Ascending aorta (tissue), 2 donors: ENCODE measurements at regions of chr17 and their contacts with region 1.

Region 1: GRCh38 chr17:40443583-40444327 is 505 bp downstream of the IGFBP4 start:
- DNase-seq: peak in 1 of 2 donors; percentile 88
- H3K4me3 ChIP-seq: peak overlapping the region; percentile 64 to 90
- H3K27ac ChIP-seq: peak overlapping the region; percentile 89 to 92
- H3K4me1 ChIP-seq: peaks cover 14 to 44% of the 10 kb centered on the region in 2 donors
- H3K27me3 ChIP-seq: no peaks in the 10 kb centered on the region
- CTCF ChIP-seq: peak in 2 of 3 experiments; percentile 25 to 43

Region 2: GRCh38 chr17:38559051-38559879 is 1884.5 kb before region 1 on chr17:
- intact Hi-C with region 1: no loop called
- DNase-seq: peak; percentile 50 to 84
- H3K4me3 ChIP-seq: peak overlapping the region; percentile 35 to 58
- H3K27ac ChIP-seq: no peak overlapping the region
- H3K4me1 ChIP-seq: peaks cover 7 to 14% of the 10 kb centered on the region in 2 donors
- H3K27me3 ChIP-seq: peaks cover 49% of the 10 kb centered on the region
- CTCF ChIP-seq: no peak

Region 3: DNA sequence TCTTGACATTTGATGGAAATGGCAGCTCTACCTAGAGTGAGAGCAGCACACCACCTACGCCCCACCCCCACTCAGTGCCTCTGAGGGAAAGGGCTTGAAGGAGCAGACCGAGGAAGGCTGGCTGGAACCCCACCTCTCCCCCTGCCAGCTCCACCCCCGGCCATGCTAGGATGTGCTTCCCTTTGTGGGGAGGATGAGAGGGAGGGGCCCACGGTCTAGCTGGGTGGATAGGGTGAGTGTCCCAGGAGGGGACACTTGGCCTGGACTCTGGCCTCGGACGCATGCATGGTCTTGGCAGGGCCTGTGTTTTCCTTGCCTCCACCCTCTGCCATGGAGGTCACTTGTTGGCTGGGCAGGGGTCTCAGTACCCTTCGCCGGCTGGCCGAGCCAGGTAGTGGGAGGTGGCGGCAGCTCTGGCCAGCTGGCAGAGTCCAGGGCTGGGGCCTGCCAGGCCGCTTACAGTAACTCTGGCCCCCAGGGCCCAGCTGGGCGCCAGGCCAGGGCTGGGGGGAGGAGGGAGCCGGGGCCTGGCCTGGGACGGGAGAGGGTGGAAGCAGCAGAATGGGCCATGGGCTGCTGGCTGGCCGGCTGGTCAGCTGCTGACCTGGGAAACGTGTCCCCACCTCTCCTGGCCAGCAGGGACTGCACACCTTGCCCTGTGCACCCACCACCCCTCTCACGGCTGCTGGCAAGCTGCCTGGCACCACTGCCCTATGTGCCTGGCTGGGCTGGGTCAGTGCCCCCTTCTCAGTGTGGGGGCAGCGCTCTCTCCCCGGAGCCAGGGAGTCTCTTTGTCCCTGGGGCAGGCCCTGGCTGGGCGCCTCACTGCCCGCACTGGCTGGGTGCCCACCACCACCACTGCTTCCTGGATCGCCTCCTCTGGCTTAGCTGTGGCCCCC is 111.8 kb before region 1 on chr17:
- intact Hi-C with region 1: no loop called
- DNase-seq: peak; percentile 72 to 95
- H3K4me3 ChIP-seq: peak overlapping the region; percentile 36 to 40
- H3K27ac ChIP-seq: peak overlapping the region; percentile 82
- H3K4me1 ChIP-seq: peaks cover 51 to 82% of the 10 kb centered on the region in 2 donors
- H3K27me3 ChIP-seq: no peaks in the 10 kb centered on the region
- CTCF ChIP-seq: no peak

Region 4: DNA sequence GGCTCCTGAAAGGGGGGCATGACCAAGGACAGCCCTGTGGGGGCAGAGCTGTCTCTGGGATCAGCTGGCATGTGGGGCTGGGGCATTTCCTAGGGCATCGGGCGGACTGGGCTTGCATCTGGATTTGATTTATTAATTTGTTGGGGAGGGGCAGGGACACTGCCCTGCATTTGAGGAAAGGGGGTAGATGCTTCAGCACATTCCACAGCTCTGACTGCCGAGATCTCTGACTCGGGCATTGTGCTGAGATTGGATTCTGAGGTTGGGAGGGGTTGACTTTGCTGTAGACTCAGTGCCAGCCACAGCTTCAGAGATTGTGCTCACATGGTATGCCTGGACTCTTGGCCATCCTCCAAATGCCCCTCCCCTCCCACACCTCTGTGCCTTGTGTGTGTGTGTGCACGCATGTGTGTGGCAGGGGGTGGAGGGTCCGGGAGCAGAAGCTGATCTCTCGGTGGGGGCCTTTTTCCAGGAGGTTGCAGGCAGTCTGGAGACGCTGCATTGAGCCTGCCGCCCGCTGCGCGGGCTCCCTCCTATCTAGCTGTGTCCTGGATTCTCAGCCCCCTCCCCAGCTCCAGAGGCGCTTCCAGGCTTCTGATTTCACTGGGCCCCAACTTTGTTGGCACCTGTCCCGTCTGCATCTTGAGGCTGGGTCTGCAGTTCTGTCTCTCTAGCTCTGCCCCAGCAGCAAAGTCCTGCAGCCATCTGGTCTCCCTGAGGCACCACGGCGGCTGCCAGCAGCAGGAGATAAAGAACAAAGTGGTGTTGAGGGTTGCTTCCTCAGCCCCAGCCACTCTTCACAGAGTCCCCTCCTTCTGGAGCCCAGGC is 14.4 kb after region 1 on chr17:
- intact Hi-C with region 1: loop called (anchors 2 kb)
- DNase-seq: no peak
- H3K4me3 ChIP-seq: no peak overlapping the region
- H3K27ac ChIP-seq: no peak overlapping the region
- H3K4me1 ChIP-seq: peaks cover 20 to 24% of the 10 kb centered on the region in 2 donors
- H3K27me3 ChIP-seq: no peaks in the 10 kb centered on the region
- CTCF ChIP-seq: no peak

Region 5: GRCh38 chr17:40480501-40481003 is 36.8 kb after region 1 on chr17:
- intact Hi-C with region 1: loop called (anchors 1 kb)
- DNase-seq: no peak
- H3K4me3 ChIP-seq: no peak overlapping the region
- H3K27ac ChIP-seq: no peak overlapping the region
- H3K4me1 ChIP-seq: peaks cover 0 to 4% of the 10 kb centered on the region in 2 donors
- H3K27me3 ChIP-seq: no peaks in the 10 kb centered on the region
- CTCF ChIP-seq: no peak